ENCODE measurements at regions of chr5 and their contacts with region 1.

Region 1: GRCh38 chr5:54944364-54944763 is 41.0 kb downstream of the ESM1 start:
- DNase-seq: peak; percentile 15
- H3K4me3 Mint-ChIP-seq: no peak overlapping the region
- H3K27ac Mint-ChIP-seq: no peak overlapping the region
- H3K4me1 Mint-ChIP-seq: no peaks in the 10 kb centered on the region
- H3K27me3 Mint-ChIP-seq: no peaks in the 10 kb centered on the region

Region 2: GRCh38 chr5:54761213-54761701 is 183.1 kb before region 1 on chr5:
- CTCF ChIA-PET with region 1: no interaction called
- POLR2A ChIA-PET with region 1: no interaction called
- intact Hi-C with region 1: no loop called
- DNase-seq: no peak
- H3K4me3 Mint-ChIP-seq: no peak overlapping the region
- H3K27ac Mint-ChIP-seq: no peak overlapping the region
- H3K4me1 Mint-ChIP-seq: peaks cover 16% of the 10 kb centered on the region
- H3K27me3 Mint-ChIP-seq: no peaks in the 10 kb centered on the region

Region 3: GRCh38 chr5:54927097-54927746 is 17.1 kb before region 1 on chr5:
- CTCF ChIA-PET with region 1: interaction called, 38 read pairs
- POLR2A ChIA-PET with region 1: interaction called, 3 read pairs
- intact Hi-C with region 1: no loop called
- DNase-seq: no peak
- H3K4me3 Mint-ChIP-seq: no peak overlapping the region
- H3K27ac Mint-ChIP-seq: peak overlapping the region; percentile 14
- H3K4me1 Mint-ChIP-seq: peaks cover 8% of the 10 kb centered on the region
- H3K27me3 Mint-ChIP-seq: no peaks in the 10 kb centered on the region

Region 4: DNA sequence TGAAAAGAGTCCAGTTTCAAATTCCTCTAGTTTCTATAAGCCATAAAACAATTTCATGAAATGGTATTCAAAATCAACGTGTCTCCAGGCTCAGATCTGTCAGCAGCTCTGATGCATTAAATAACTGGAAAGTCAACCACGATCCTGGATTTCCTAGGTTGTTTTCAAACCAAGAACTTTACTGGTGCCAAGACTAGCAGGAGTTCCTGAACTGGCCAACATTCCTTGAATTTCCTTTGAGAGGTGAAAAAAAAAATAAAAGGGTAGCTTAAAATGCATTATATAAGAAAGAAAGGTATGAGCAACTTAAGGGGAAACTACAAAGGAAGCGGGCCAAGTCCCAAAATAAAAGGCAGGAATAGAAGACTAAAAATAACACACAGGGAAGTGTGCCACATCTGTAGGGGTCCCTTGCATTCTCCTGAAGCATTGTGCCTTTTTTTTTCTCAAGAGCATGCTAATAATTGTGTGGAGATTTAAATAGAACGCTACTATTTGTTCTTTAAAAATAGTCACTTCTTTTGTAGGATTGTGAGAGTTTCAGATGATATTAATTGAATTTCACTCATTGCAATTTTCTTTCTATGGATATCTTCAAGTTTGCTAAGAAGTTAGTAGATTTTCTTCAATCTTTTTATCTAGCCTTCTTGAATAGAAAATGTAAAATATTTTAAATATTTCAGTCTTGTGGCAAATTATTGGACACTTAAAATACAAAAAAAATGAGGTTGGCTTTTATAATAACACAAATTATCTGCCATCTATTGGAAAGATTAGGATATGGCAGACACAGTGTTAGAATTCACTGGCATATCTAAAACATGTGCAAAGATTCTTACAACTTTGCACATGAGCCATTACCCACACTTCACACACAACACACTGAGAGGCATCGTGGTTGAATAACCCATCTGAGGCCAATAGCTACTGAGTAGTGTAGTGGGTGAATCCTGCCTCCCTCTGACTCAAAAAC is 25.8 kb after region 1 on chr5:
- CTCF ChIA-PET with region 1: interaction called, 24 read pairs
- POLR2A ChIA-PET with region 1: no interaction called
- intact Hi-C with region 1: no loop called
- DNase-seq: no peak
- H3K4me3 Mint-ChIP-seq: no peak overlapping the region
- H3K27ac Mint-ChIP-seq: no peak overlapping the region
- H3K4me1 Mint-ChIP-seq: no peaks in the 10 kb centered on the region
- H3K27me3 Mint-ChIP-seq: no peaks in the 10 kb centered on the region

Region 5: GRCh38 chr5:55037046-55037771 is 92.8 kb after region 1 on chr5:
- CTCF ChIA-PET with region 1: interaction called, 24 read pairs
- POLR2A ChIA-PET with region 1: no interaction called
- intact Hi-C with region 1: no loop called
- DNase-seq: peak; percentile 89
- H3K4me3 Mint-ChIP-seq: peak overlapping the region; percentile 45
- H3K27ac Mint-ChIP-seq: peak overlapping the region; percentile 89
- H3K4me1 Mint-ChIP-seq: peaks cover 29% of the 10 kb centered on the region
- H3K27me3 Mint-ChIP-seq: no peaks in the 10 kb centered on the region

Region 6: DNA sequence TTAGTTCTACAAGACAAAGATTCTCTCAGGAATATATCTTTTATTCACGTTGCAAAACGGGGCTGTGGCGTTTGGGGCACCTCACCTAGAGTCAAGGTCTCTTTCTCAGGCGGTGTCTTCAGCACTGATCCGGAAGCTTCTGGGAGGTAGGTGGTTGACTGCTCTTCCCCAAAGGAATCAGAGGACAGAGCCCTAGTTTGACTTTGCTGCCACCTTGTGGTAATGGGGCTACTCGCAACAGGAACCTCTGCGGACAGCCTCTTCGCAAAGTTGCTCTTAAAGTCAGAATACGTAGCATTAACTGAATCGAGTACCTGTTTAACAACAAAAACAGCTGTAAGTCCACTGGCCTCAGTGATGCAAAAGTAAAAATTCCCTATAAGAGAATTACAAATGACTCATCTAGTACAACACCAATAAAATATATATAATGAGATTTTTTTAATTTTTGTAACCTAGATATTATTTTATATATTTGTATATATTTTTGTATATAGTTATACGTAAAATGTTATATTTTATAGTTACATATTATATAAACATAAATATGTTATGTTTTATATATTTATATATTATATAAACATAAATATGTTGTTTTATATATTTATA is 202.3 kb after region 1 on chr5:
- CTCF ChIA-PET with region 1: interaction called, 96 read pairs
- POLR2A ChIA-PET with region 1: no interaction called
- intact Hi-C with region 1: loop called (anchors 1 kb)
- DNase-seq: peak; percentile 89
- H3K4me3 Mint-ChIP-seq: no peak overlapping the region
- H3K27ac Mint-ChIP-seq: no peak overlapping the region
- H3K4me1 Mint-ChIP-seq: peaks cover 12% of the 10 kb centered on the region
- H3K27me3 Mint-ChIP-seq: peaks cover 1% of the 10 kb centered on the region